H1 (cell line): ENCODE measurements at regions of chr12 and their contacts with region 1.

Region 1: DNA sequence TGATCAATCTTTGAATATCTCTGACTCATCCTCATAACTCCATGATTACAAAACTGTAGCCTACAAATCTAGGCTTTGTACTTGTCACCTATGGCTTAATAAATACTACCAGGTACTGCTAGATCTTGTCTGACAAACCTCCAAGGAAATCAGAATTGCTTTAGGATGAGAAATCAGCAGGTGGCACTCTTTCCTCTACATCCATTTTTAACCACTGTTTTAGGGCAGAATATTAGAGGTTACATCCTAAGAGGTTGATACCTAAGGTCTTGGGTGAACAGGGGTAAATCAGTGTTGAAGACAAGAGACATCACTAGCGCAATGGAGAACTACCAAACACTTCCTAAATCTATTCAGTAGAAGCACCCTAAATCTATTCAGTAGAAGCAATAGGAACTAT is 63.1 kb upstream of the SOX5 start:
- DNase-seq: no peak
- H3K4me3 ChIP-seq: no peak overlapping the region
- H3K27ac ChIP-seq: no peak overlapping the region
- H3K4me1 ChIP-seq: peaks cover 0 to 4% (median 0%) of the 10 kb centered on the region in 4 experiments; a peak in 3 of 7 replicates
- H3K27me3 ChIP-seq: peaks cover 15 to 30% (median 18%) of the 10 kb centered on the region in 4 experiments
- CTCF ChIP-seq: peak in 1 of 3 experiments; percentile 22; a peak in 1 of 4 replicates
- EP300 ChIP-seq: no peak
- POLR2A ChIP-seq: no peak
- RAD21 ChIP-seq: peak; percentile 49

Region 2: DNA sequence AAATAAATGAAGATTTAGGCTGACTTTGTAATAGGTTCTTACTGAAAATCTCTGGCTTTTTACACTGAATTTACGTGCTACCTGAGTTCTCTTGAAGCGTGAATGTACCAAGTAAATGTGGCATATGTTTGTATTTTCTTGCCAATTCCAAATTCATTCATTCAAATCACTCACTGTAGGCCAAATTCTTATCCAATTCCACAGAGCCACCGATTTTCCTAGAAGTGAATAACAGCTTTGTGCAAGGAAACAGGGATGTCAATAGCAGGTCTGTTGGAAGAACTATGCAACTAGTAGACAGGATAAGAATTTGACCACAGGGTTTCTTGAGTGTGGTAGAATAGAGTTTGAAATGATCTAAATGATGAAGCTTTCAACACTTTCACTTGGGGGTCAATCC is 149.8 kb before region 1 on chr12:
- CTCF ChIA-PET with region 1: no interaction called
- POLR2A ChIA-PET with region 1: no interaction called
- DNase-seq: no peak
- H3K4me3 ChIP-seq: no peak overlapping the region
- H3K27ac ChIP-seq: no peak overlapping the region
- H3K4me1 ChIP-seq: no peaks in the 10 kb centered on the region
- H3K27me3 ChIP-seq: no peaks in the 10 kb centered on the region
- CTCF ChIP-seq: no peak
- EP300 ChIP-seq: no peak
- POLR2A ChIP-seq: no peak
- RAD21 ChIP-seq: no peak

Region 3: DNA sequence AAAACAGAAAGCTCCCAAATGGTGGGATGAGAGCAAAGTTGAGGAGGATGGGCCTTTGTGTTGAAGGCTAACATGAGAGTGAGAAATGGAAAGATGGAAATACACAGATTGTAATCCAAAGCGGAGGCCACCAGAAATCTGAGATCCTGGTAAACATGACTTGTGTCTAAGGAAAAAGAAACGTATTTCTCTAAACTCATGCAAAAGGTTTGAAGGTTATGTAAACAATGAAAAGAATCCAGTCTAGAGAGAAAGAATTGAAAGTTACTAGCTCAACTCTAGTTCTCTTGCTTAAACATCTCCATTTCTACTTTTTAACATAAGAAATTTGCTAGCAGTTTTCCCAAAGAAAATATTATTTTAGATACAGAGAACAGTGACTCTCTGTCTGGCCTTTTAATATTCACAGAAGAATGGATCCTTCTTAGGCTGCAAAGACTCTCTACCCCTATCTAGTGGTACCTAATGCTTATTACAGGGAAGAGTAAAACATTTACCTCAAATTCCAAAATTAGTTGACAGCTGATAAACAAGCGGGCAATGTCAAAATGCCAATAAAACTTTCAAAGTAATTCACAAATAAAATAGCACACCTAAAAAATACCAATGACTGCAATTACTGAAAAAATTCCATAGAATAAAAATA is 12.7 kb after region 1 on chr12:
- CTCF ChIA-PET with region 1: interaction called, 22 read pairs
- POLR2A ChIA-PET with region 1: no interaction called
- DNase-seq: no peak
- H3K4me3 ChIP-seq: no peak overlapping the region
- H3K27ac ChIP-seq: no peak overlapping the region
- H3K4me1 ChIP-seq: peaks cover 0 to 12% (median 0%) of the 10 kb centered on the region in 4 experiments; a peak in 1 of 7 replicates
- H3K27me3 ChIP-seq: no peaks in the 10 kb centered on the region
- CTCF ChIP-seq: peak in 2 of 3 experiments; percentile 15 to 51; a peak in 2 of 4 replicates
- EP300 ChIP-seq: no peak
- POLR2A ChIP-seq: no peak
- RAD21 ChIP-seq: peak; percentile 67 to 71